ENCODE measurements at regions of chr5 and their contacts with region 1.

Region 1: GRCh38 chr5:71757590-71758543 is 38.8 kb downstream of the CARTPT start:
- DNase-seq: peak; percentile 55
- H3K4me3 ChIP-seq: no peak overlapping the region
- H3K27ac ChIP-seq: no peak overlapping the region
- H3K4me1 ChIP-seq: no peaks in the 10 kb centered on the region
- H3K27me3 ChIP-seq: no peaks in the 10 kb centered on the region
- CTCF ChIP-seq: peak; percentile 70

Region 2: GRCh38 chr5:71658916-71659662 is 98.8 kb before region 1 on chr5:
- intact Hi-C with region 1: loop called (anchors 5 kb)
- DNase-seq: no peak
- H3K4me3 ChIP-seq: no peak overlapping the region
- H3K27ac ChIP-seq: no peak overlapping the region
- H3K4me1 ChIP-seq: no peaks in the 10 kb centered on the region
- H3K27me3 ChIP-seq: no peaks in the 10 kb centered on the region
- CTCF ChIP-seq: peak; percentile 17

Region 3: DNA sequence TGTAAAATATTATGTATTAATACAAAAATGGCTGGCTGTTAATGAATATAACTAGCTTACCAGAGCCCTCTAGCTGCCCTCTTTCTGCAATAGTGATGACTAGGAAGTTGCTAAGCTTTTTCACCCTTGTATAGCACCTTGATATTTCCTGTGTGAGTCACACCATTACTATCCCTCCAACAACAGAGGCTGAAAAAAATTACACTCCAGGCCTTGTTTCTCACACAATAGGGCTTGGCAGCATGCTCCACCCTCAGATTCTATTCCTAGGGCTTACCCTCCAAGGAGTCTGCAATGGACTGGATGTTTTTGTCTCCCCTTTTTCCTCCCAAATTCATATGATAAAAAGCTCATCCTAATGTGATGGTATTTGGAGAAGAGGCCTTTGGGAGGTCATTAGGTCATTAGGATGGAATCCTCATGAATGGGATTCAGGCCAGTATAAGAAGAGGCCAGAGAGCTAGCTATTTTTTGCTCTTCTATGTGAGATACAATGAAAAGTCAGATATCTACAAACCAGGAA is 164.8 kb after region 1 on chr5:
- intact Hi-C with region 1: no loop called
- DNase-seq: no peak
- H3K4me3 ChIP-seq: no peak overlapping the region
- H3K27ac ChIP-seq: no peak overlapping the region
- H3K4me1 ChIP-seq: no peaks in the 10 kb centered on the region
- H3K27me3 ChIP-seq: no peaks in the 10 kb centered on the region
- CTCF ChIP-seq: no peak

Region 4: DNA sequence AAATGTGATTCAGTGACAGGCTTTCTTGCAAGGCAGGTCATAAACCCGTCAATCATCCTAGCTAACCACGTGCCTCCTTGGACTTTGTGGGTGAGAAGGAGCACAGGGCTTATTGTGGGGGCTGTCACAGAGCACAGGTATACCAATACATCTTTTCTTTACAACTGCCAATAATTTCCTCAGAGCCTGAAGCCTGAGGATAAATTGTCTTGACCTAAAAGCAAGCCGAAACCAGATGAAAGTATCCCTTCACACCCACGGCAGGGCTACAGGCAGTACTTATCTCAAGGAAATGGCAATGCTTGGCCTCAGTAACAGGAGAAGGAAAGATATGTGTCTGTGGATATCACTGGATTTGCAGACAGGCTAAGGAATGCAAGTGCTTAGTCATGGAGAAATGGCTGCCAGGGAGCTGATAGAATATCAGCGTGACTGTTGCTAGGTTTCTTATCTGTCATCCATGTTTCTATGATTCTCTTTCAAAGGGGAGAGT is 839.6 kb after region 1 on chr5:
- intact Hi-C with region 1: no loop called
- DNase-seq: no peak
- H3K4me3 ChIP-seq: no peak overlapping the region
- H3K27ac ChIP-seq: no peak overlapping the region
- H3K4me1 ChIP-seq: peaks cover 20% of the 10 kb centered on the region
- H3K27me3 ChIP-seq: no peaks in the 10 kb centered on the region
- CTCF ChIP-seq: no peak

Measured in colonic mucosa (tissue), 4 donors.